Calu3 (cell line): ENCODE measurements at regions of chr7 and their contacts with region 1.

Region 1: DNA sequence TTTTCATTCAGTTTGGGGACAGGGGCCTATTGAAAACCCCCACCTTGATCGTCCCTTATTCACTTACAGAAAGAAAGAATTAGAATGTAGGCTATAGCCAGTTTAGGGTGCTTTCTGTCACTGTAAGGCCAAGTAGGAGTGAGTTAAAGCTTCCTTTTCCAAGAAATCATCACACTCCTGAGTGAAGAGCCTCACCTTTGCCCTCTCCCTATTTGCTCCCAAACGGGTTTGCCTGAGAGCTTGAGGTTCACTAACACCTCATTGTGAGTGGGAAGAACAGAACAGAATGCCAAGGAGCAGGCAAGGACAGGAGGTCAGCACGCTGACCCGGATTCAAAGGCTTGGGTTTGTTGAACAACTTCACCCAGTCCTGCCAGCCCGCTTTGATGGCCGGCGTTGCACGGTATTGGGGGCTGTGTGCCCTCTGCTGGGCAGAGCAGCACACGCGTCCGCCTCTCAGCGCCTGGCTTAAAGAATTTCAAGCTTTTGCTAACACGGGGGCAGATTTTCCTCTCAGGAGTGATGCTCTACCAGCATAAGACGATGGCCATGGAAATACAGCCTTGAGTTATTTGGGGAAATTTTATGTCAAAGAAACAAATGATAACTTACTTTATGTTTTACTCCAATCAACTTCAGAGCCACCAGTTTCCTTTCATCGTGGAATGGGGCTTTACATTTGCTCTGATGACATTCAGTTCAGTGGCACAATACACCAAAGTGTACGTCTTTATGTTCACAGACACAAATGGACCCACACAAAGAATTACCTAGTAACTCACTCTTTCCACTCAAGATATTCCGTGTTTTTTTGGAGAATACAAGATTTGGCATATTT is 470.0 kb downstream of the SUGCT start:
- DNase-seq: peak; percentile 72
- H3K4me3 Mint-ChIP-seq: no peak overlapping the region
- H3K27ac Mint-ChIP-seq: no peak overlapping the region
- H3K4me1 Mint-ChIP-seq: peaks cover 10% of the 10 kb centered on the region
- H3K27me3 Mint-ChIP-seq: no peaks in the 10 kb centered on the region
- CTCF ChIP-seq: peak; percentile 92

Region 2: DNA sequence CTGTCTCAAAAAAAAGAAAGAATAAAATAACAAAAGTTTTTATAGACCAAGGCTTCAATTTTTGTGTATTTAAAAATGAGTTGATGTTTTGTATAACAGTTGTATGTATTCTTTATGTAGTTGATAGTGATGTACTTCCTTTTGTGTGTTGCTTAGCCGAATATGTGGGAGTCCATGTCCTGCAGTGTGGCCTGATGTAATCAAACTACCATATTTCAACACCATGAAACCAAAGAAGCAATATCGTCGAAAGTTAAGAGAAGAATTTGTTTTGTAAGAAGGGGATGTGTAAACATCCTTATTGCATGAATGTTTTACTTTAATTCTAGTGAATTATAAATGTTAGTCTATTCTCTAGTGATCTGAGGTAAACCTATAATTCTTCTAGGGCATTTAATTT is 527.0 kb before region 1 on chr7:
- CTCF ChIA-PET with region 1: no interaction called
- intact Hi-C with region 1: no loop called
- DNase-seq: no peak
- H3K4me3 Mint-ChIP-seq: no peak overlapping the region
- H3K27ac Mint-ChIP-seq: no peak overlapping the region
- H3K4me1 Mint-ChIP-seq: no peaks in the 10 kb centered on the region
- H3K27me3 Mint-ChIP-seq: no peaks in the 10 kb centered on the region
- CTCF ChIP-seq: no peak

Region 3: GRCh38 chr7:40232242-40232893 is 372.5 kb before region 1 on chr7:
- CTCF ChIA-PET with region 1: interaction called, 11 read pairs
- intact Hi-C with region 1: loop called (anchors 5 kb)
- DNase-seq: peak; percentile 57
- H3K4me3 Mint-ChIP-seq: no peak overlapping the region
- H3K27ac Mint-ChIP-seq: no peak overlapping the region
- H3K4me1 Mint-ChIP-seq: peaks cover 9% of the 10 kb centered on the region
- H3K27me3 Mint-ChIP-seq: no peaks in the 10 kb centered on the region
- CTCF ChIP-seq: peak; percentile 62

Region 4: DNA sequence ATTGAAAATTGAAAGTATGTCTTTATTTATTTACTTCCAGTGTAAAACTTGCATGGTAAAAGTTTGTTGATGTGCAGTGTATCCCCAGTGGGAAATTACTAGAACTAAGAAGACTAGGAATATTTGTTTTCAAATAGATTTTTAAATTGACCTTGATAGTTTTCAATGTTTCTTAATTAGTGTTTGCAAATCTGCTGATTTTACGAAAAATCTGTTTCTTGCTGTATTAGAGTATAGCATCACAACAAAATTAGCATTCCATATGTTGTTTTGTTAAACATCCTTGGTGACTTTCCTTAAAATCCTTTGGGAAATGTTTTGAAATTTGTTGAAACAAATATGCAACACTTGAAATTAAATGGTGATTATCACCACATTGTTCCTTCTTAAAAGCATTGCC is 44.1 kb before region 1 on chr7:
- CTCF ChIA-PET with region 1: no interaction called
- intact Hi-C with region 1: no loop called
- DNase-seq: no peak
- H3K4me3 Mint-ChIP-seq: no peak overlapping the region
- H3K27ac Mint-ChIP-seq: no peak overlapping the region
- H3K4me1 Mint-ChIP-seq: no peaks in the 10 kb centered on the region
- H3K27me3 Mint-ChIP-seq: no peaks in the 10 kb centered on the region
- CTCF ChIP-seq: no peak

Region 5: GRCh38 chr7:41731492-41732435 is 1126.9 kb after region 1 on chr7:
- CTCF ChIA-PET with region 1: no interaction called
- intact Hi-C with region 1: loop called (anchors 5 kb)
- DNase-seq: no peak
- H3K4me3 Mint-ChIP-seq: no peak overlapping the region
- H3K27ac Mint-ChIP-seq: no peak overlapping the region
- H3K4me1 Mint-ChIP-seq: peaks cover 8% of the 10 kb centered on the region
- H3K27me3 Mint-ChIP-seq: peaks cover 28% of the 10 kb centered on the region
- CTCF ChIP-seq: peak; percentile 57